IMR-90 (cell line): ENCODE measurements at regions of chr2 and their contacts with region 1.

Region 1: DNA sequence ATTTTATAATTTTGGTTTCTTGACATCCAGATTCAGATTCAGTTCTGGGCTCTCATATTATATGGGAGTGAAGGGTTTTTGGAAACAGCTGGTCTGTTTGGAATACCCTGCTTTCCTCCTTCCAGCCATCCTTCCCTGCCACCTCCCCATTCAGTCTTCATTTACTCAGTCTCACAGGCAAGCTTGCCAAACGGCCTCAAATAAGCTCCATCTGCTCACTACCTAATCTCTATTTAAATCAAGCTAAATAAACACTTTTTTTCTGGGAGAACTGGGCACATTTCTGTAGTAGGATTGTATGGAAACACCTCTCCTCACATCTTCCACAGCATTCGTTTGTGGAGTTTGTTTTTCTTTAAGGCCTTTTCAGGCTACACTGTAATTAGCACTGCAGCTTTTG is 147.5 kb downstream of the RND3 start:
- DNase-seq: peak; percentile 20
- ATAC-seq: peak; percentile 60
- H3K4me3 ChIP-seq: no peak overlapping the region
- H3K27ac ChIP-seq: no peak overlapping the region
- H3K4me1 ChIP-seq: no peaks in the 10 kb centered on the region
- H3K27me3 ChIP-seq: no peaks in the 10 kb centered on the region
- CTCF ChIP-seq: no peak
- POLR2A ChIP-seq: no peak
- RAD21 ChIP-seq: no peak

Region 2: GRCh38 chr2:150292807-150293206 is 47.2 kb before region 1 on chr2:
- CTCF ChIA-PET with region 1: no interaction called
- POLR2A ChIA-PET with region 1: no interaction called
- dilution Hi-C with region 1: no loop called
- in situ Hi-C with region 1: no loop called
- intact Hi-C with region 1: loop called (anchors 5 kb)
- DNase-seq: peak; percentile 50
- ATAC-seq: 0 out of 2 replicates have a peak, but pooled peaks have one; percentile 44
- H3K4me3 ChIP-seq: no peak overlapping the region
- H3K27ac ChIP-seq: no peak overlapping the region
- H3K4me1 ChIP-seq: no peaks in the 10 kb centered on the region
- H3K27me3 ChIP-seq: no peaks in the 10 kb centered on the region
- CTCF ChIP-seq: no peak
- POLR2A ChIP-seq: no peak
- RAD21 ChIP-seq: no peak